Activated T-helper 1 cell treated with anti-CD3 and anti-CD28 coated beads, Interleukin-12 subunit alpha, Interleukin-12 subunit beta, Interleukin-2, Interleukin-4 antibody, amounts not matched to agents 30 ng/mL and 10 ng/mL and 1 ng/mL, durations not matched to agents 14 hours and 24 hours and 36 hours (primary cell): ENCODE measurements at regions of chr2 and their contacts with region 1.

Region 1: DNA sequence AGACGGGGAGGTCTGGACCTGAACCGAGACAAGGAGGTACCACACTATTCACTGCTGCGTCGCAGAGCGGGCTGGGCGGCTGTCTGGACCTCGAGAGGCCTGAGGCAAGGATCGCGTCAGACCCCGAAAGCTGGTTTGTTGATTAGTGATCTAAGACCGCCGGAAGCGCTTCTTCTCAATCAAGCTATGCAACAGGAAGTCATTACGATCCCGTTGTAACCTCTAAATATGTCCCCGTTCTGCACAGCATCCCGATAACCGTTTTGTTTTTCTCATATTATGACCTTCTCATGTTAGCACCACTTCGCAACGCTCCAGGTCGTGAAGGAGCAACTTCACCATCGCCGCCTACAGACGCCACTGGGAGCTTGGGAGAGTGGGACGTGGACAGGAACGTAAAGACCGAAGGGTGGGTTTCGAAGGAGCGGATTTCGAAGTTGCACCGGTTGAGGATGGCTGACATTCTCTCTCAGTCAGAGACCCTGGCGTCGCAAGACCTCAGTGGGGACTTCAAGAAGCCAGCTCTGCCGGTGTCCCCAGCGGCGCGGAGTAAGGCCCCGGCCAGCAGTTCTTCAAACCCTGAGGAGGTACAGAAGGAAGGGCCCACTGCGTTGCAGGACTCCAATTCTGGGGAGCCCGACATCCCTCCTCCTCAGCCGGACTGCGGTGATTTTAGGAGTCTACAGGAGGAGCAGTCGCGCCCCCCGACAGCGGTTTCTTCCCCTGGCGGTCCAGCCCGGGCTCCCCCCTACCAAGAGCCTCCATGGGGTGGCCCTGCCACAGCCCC is at the starts of genes SLC4A1AP and SUPT7L:
- DNase-seq: peak; percentile 70
- H3K4me3 Mint-ChIP-seq: peak within 1 kb of the TSS; percentile 96
- H3K27ac Mint-ChIP-seq: peak within 1 kb of the TSS; percentile 97
- H3K4me1 Mint-ChIP-seq: peaks cover 55% of the 10 kb centered on the region
- H3K27me3 Mint-ChIP-seq: no peaks in the 10 kb centered on the region
- total RNA-seq, gene SLC4A1AP: 29.7 and 29.8 TPM in 2 replicates
- total RNA-seq, gene SUPT7L: 32.5 and 35.2 TPM in 2 replicates

Region 2: GRCh38 chr2:27211829-27212627 is 451.6 kb before region 1 on chr2 and contains the starts of genes ATRAID and SLC5A6:
- intact Hi-C with region 1: loop called (anchors 1 kb)
- DNase-seq: peak; percentile 90
- H3K4me3 Mint-ChIP-seq: peak within 1 kb of the TSS; percentile 99
- H3K27ac Mint-ChIP-seq: peak within 1 kb of the TSS; percentile 100
- H3K4me1 Mint-ChIP-seq: peaks cover 53% of the 10 kb centered on the region
- H3K27me3 Mint-ChIP-seq: no peaks in the 10 kb centered on the region
- total RNA-seq, gene ATRAID: 107 and 111 TPM in 2 replicates
- total RNA-seq, gene SLC5A6: 89.2 and 105 TPM in 2 replicates

Region 3: GRCh38 chr2:27582695-27583389 is 80.8 kb before region 1 on chr2 and contains the start of gene ZNF512:
- intact Hi-C with region 1: loop called (anchors 1 kb)
- DNase-seq: peak; percentile 75
- H3K4me3 Mint-ChIP-seq: peak within 1 kb of the TSS; percentile 86
- H3K27ac Mint-ChIP-seq: peak within 1 kb of the TSS; percentile 79
- H3K4me1 Mint-ChIP-seq: peaks cover 45% of the 10 kb centered on the region
- H3K27me3 Mint-ChIP-seq: peaks cover 7% of the 10 kb centered on the region
- total RNA-seq, gene ZNF512: 24.6 and 25.0 TPM in 2 replicates

Region 4: DNA sequence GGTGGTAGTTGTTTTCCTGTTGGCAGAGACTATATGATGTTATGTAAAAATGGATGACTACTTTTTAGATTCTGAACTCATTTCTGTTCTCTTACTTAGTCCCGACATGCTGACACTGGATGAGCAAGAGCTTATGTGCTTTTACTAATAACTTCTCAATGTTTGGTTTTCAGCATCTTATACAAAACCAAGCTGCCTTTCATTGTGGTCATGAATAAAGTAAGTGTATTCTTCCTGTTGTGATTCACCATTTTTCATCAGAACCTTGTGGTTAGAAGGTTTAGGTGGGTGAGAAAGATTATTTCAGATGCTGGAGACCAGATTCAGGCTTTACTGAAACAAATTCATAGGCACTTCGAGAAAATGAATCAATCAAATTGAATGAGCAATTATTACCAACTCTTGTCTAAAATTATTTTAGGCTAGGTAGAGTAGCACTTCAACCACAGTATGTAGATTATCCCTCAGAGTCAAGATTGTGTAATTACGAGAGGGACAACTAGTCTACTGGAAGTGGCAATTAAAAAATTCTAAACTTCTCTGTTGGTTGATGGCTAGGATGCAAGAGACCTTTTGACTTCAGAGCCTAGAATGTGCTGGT is 25.5 kb before region 1 on chr2:
- intact Hi-C with region 1: loop called (anchors 1 kb)
- DNase-seq: no peak
- H3K4me3 Mint-ChIP-seq: peak overlapping the region; percentile 66
- H3K27ac Mint-ChIP-seq: peak overlapping the region; percentile 91
- H3K4me1 Mint-ChIP-seq: peaks cover 19% of the 10 kb centered on the region
- H3K27me3 Mint-ChIP-seq: no peaks in the 10 kb centered on the region

Region 5: GRCh38 chr2:27771548-27772335 is 108.1 kb after region 1 on chr2 and contains the start of gene MRPL33:
- intact Hi-C with region 1: loop called (anchors 1 kb)
- DNase-seq: peak; percentile 86
- H3K4me3 Mint-ChIP-seq: peak within 1 kb of the TSS; percentile 99
- H3K27ac Mint-ChIP-seq: peak within 1 kb of the TSS; percentile 96
- H3K4me1 Mint-ChIP-seq: peaks cover 47% of the 10 kb centered on the region
- H3K27me3 Mint-ChIP-seq: no peaks in the 10 kb centered on the region
- total RNA-seq, gene MRPL33: 55.4 and 55.9 TPM in 2 replicates

Region 6: DNA sequence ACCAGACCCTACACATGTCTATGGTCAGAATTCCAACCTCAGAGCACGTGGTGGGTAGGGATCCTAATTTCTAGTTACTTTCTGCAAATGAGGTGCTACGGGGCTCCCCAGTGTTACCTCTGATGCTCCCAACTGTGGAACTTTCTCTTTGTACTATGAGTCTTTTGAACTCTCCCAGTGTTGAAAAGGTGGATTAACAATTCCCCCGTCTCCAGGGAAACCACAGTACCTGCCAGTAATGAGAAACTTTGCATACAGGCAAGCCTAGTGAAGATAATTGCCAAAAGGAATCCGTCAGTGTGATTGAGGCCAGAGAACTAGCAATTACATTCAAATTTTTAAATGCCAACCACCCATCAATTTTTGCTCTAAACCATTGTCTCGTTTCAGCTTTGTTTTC is 600.0 kb after region 1 on chr2:
- intact Hi-C with region 1: no loop called
- DNase-seq: no peak
- H3K4me3 Mint-ChIP-seq: no peak overlapping the region
- H3K27ac Mint-ChIP-seq: no peak overlapping the region
- H3K4me1 Mint-ChIP-seq: peaks cover 18% of the 10 kb centered on the region
- H3K27me3 Mint-ChIP-seq: no peaks in the 10 kb centered on the region